Activated B cell treated with CpG ODN at 0.5 μM for 24 hours (primary cell): ENCODE measurements at regions of chr6 and their contacts with region 1.

Region 1: DNA sequence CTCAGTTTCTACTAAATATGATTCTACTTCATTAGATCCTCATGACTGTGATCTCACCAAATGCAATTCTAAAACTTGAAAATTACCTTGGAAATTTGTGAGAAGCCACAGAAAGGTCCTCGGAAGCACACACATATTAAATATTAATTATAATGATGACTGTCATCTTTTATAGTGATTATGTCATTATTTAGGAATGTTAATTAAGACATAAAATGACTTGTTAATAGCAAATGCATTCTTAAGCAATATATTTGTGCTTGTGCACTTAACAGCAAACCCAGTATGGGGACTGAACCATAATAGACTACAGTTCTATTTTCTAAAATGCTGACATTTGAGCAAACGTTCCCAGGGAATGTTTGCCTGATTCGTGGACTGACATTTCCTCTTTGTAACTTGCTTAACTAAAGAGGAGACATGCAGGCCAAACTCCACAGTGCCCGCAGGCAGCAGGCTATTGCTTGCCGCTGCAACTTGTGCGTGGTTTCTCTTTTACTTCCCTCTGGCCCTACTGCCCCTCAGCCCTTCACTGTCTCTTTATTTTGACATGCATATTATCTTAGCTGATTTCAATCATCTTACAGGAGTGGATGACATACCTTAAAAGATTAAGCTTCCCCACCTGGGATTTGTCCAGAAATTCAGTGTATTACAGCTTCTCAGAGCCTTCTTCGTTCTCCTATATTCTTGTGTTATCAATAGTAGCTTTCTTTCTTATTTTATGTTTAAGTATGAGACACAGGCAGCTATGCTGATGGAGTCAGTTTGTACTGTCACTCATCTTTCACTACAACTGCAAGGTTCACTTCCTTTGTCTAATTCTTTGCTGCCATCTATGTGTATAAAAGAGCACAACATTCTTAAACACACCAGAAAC is 141.5 kb downstream of the GMDS start:
- DNase-seq: no peak
- ATAC-seq: peak; percentile 49
- H3K4me3 Mint-ChIP-seq: no peak overlapping the region
- H3K27ac Mint-ChIP-seq: no peak overlapping the region
- H3K4me1 Mint-ChIP-seq: no peaks in the 10 kb centered on the region
- H3K27me3 Mint-ChIP-seq: no peaks in the 10 kb centered on the region
- CTCF ChIP-seq: no peak

Region 2: DNA sequence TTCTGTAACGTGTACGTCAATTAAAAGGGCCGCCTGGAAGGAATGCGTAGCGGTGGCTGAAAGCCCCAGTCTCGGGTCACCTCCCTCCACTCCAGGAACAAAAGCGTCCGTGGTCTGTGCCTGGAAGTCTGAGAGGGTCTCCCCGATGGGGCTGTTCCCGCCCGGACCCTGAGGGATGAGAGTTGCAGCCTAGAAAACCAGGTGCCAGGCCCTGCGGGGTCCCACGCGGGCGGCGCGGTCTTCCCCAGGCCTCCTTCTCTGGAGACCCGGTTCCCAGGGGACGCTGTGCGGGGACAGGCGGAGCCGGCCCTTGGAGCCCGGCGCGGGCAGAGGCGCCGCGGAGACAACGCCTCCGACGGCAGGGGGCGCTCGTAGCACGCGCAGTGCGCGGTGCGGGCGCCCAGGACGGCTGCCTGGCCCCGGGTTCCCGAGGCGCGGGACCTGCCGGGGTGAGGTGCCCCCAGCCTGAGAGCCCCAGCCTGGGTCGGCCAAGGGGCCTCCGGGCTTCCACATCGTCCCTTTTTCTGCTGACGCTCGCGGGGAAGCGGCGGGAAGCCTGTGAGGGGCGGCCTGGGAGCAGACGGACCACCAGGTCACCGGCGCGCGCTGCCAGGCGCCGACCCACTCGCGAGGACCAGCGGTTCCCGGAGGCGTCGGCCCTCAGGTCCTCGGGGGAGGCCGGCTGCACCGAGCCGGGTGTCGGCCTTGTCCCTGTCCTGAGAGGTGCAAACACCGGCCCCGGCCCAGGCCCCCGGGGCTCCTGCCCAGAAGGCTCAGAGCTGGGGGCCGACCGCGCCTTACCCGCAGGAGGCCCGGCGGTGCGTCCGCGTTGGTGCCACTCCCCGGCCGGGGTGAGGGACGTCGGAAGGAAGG is 499.5 kb before region 1 on chr6:
- CTCF ChIA-PET with region 1: interaction called, 43 read pairs
- POLR2A ChIA-PET with region 1: interaction called, 4 read pairs
- intact Hi-C with region 1: loop called (anchors 1 kb)
- DNase-seq: peak; percentile 80
- ATAC-seq: peak; percentile 76
- H3K4me3 Mint-ChIP-seq: no peak overlapping the region
- H3K27ac Mint-ChIP-seq: no peak overlapping the region
- H3K4me1 Mint-ChIP-seq: peaks cover 34% of the 10 kb centered on the region
- H3K27me3 Mint-ChIP-seq: peaks cover 73% of the 10 kb centered on the region
- CTCF ChIP-seq: no peak

Region 3: GRCh38 chr6:1739680-1740079 is 364.2 kb before region 1 on chr6:
- CTCF ChIA-PET with region 1: no interaction called
- POLR2A ChIA-PET with region 1: no interaction called
- intact Hi-C with region 1: loop called (anchors 2 kb)
- DNase-seq: peak; percentile 31
- ATAC-seq: peak; percentile 84
- H3K4me3 Mint-ChIP-seq: peak overlapping the region; percentile 72
- H3K27ac Mint-ChIP-seq: no peak overlapping the region
- H3K4me1 Mint-ChIP-seq: peaks cover 11% of the 10 kb centered on the region
- H3K27me3 Mint-ChIP-seq: no peaks in the 10 kb centered on the region
- CTCF ChIP-seq: no peak

Region 4: GRCh38 chr6:1856381-1856780 is 247.5 kb before region 1 on chr6:
- CTCF ChIA-PET with region 1: no interaction called
- POLR2A ChIA-PET with region 1: interaction called, 3 read pairs
- intact Hi-C with region 1: loop called (anchors 5 kb)
- DNase-seq: peak; percentile 32
- ATAC-seq: peak; percentile 84
- H3K4me3 Mint-ChIP-seq: peak overlapping the region; percentile 30
- H3K27ac Mint-ChIP-seq: peak overlapping the region; percentile 54
- H3K4me1 Mint-ChIP-seq: peaks cover 36% of the 10 kb centered on the region
- H3K27me3 Mint-ChIP-seq: no peaks in the 10 kb centered on the region
- CTCF ChIP-seq: no peak

Region 5: DNA sequence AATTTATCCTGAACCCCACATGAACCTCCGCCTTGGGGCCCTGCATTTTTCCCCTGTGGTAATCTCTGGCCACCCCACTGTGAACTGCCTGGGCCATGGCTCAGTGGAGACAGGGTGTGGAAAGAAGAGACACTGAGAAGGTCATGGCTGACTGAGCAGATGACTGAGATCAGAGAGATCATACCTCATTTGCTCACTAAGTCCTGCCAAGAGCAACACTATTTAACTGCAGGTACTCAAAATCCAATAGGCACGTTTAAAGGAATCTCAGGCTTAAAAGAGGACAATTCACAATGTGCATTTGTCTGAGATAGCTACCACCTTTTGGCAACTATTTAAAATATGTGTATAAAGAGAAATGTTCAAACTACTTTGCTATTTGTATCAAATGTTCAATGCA is 163.5 kb before region 1 on chr6:
- CTCF ChIA-PET with region 1: no interaction called
- POLR2A ChIA-PET with region 1: no interaction called
- intact Hi-C with region 1: no loop called
- DNase-seq: no peak
- ATAC-seq: peak; percentile 76
- H3K4me3 Mint-ChIP-seq: no peak overlapping the region
- H3K27ac Mint-ChIP-seq: no peak overlapping the region
- H3K4me1 Mint-ChIP-seq: peaks cover 7% of the 10 kb centered on the region
- H3K27me3 Mint-ChIP-seq: no peaks in the 10 kb centered on the region
- CTCF ChIP-seq: no peak

Region 6: GRCh38 chr6:2353412-2354137 is 249.7 kb after region 1 on chr6:
- CTCF ChIA-PET with region 1: interaction called, 5 read pairs
- POLR2A ChIA-PET with region 1: no interaction called
- intact Hi-C with region 1: loop called (anchors 2 kb)
- DNase-seq: no peak
- ATAC-seq: no peak
- H3K4me3 Mint-ChIP-seq: no peak overlapping the region
- H3K27ac Mint-ChIP-seq: no peak overlapping the region
- H3K4me1 Mint-ChIP-seq: no peaks in the 10 kb centered on the region
- H3K27me3 Mint-ChIP-seq: no peaks in the 10 kb centered on the region
- CTCF ChIP-seq: no peak

Region 7: DNA sequence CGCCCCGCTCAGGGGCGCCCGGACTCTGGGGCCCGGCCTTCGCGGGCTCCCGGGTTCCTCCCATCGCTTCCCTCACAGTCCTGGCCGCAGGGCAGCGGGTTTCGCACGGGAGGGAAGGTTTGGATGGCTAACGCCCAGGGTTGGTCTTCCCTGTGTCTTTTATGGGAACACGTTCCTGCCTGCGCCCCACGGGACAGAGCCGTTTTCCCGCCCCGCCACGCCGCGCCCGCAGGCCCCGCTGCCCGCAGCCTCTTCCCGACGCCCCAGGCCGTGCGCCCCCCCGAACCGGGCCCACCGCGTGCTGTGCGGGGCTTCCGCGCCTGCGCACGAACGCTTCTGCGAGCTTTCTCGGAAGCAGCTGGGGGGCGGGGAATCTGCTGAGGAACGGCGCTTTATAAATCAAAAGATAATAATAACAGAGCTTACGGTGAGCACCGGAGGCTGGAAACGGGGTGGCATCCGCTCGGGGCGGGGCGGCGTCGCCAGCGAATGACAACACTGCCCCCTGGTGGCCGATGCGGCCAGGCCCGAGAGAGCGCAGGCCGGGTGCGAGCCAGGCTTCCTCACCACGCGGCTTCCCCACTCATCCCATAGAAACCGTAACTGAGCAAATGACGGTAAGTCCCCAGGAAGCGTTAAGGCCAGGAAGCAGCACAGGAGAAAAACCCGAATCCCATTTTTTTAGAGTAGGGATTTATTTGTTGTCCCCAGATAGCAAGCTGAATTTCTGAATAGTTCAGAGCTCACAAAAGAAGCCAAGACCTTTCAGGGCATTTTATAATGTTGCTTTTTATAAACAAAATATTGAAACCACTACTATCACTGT is 530.5 kb after region 1 on chr6:
- CTCF ChIA-PET with region 1: no interaction called
- POLR2A ChIA-PET with region 1: no interaction called
- intact Hi-C with region 1: loop called (anchors 1 kb)
- DNase-seq: peak; percentile 82
- ATAC-seq: peak; percentile 97
- H3K4me3 Mint-ChIP-seq: peak overlapping the region; percentile 79
- H3K27ac Mint-ChIP-seq: no peak overlapping the region
- H3K4me1 Mint-ChIP-seq: peaks cover 3% of the 10 kb centered on the region
- H3K27me3 Mint-ChIP-seq: peaks cover 2% of the 10 kb centered on the region
- CTCF ChIP-seq: no peak